H1 (cell line): ENCODE measurements at regions of chr6 and their contacts with region 1.

Region 1: DNA sequence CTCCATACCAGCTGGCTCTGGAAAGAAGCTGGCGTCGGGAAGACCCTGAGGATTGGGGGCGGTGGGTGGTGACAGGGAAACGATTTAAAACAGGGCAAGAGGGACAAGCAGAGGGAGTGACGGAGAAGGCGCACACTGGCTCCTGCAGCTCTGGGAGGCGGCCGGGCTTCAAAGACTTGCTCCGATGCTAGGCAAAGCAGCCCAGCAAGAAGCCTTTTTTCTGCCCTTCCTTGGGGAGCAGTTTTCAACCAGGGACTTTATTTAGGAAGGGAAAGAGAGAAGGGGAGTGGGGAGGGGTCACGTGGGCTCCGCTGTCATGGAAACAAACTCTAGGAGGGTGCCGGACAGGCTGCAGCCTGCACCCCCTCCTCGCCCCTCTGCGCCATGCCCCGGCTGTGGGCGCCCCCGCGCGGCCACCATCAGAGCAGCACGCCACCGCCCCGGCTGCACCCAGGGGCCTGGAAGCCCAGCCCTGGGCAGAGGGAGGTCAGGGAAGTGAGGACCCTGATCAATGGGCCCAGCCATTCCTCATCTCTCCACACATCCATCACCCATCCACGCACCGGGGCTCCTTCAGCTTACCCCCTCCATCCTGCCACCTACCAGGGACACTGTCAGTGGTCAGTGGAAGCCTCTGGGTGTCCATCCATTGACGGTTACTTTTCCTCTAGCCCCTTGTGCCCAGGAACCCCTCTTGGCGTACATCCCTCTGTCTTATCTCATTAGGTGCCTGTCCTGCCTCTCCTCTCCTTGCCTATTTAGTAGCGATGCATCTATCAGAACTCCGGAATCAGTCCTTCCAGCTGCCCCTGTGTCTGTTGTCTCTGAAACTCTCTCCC is 66.6 kb upstream of the CCDC167 start:
- DNase-seq: peak in 1 of 2 experiments; percentile 95
- H3K4me3 ChIP-seq: peak overlapping the region; percentile 21 to 71 (median 54)
- H3K27ac ChIP-seq: no peak overlapping the region
- H3K4me1 ChIP-seq: peaks cover 2 to 13% (median 5%) of the 10 kb centered on the region in 4 experiments; a peak in 6 of 7 replicates
- H3K27me3 ChIP-seq: no peaks in the 10 kb centered on the region; a peak in 2 of 7 replicates
- CTCF ChIP-seq: peak; percentile 84 to 93 (median 91)
- EP300 ChIP-seq: 0 out of 3 replicates have a peak, but pooled peaks of 1 of the 2 experiments have one; percentile 30
- POLR2A ChIP-seq: no peak
- RAD21 ChIP-seq: peak; percentile 89

Region 2: GRCh38 chr6:35905841-35906498 is 1660.4 kb before region 1 on chr6:
- CTCF ChIA-PET with region 1: no interaction called
- POLR2A ChIA-PET with region 1: no interaction called
- DNase-seq: no peak
- H3K4me3 ChIP-seq: no peak overlapping the region
- H3K27ac ChIP-seq: no peak overlapping the region
- H3K4me1 ChIP-seq: no peaks in the 10 kb centered on the region
- H3K27me3 ChIP-seq: no peaks in the 10 kb centered on the region
- CTCF ChIP-seq: no peak
- EP300 ChIP-seq: no peak
- POLR2A ChIP-seq: no peak
- RAD21 ChIP-seq: no peak

Region 3: GRCh38 chr6:37353761-37354525 is 212.4 kb before region 1 on chr6 and contains the start of gene RNF8:
- CTCF ChIA-PET with region 1: no interaction called
- POLR2A ChIA-PET with region 1: no interaction called
- DNase-seq: peak; percentile 82 to 95
- H3K4me3 ChIP-seq: peak within 1 kb of the TSS; percentile 81 to 96 (median 88)
- H3K27ac ChIP-seq: peak within 1 kb of the TSS; percentile 36; the same call in 1 of the 2 replicates
- H3K4me1 ChIP-seq: peaks cover 0 to 3% (median 3%) of the 10 kb centered on the region in 4 experiments; a peak in 4 of 7 replicates
- H3K27me3 ChIP-seq: no peaks in the 10 kb centered on the region; a peak in 1 of 7 replicates
- CTCF ChIP-seq: no peak
- EP300 ChIP-seq: no peak
- POLR2A ChIP-seq: peak in 1 of 2 experiments; percentile 68; a peak in 2 of 3 replicates
- RAD21 ChIP-seq: no peak
- total RNA-seq, gene RNF8: 44.7 and 46.2 TPM in 2 replicates

Region 4: DNA sequence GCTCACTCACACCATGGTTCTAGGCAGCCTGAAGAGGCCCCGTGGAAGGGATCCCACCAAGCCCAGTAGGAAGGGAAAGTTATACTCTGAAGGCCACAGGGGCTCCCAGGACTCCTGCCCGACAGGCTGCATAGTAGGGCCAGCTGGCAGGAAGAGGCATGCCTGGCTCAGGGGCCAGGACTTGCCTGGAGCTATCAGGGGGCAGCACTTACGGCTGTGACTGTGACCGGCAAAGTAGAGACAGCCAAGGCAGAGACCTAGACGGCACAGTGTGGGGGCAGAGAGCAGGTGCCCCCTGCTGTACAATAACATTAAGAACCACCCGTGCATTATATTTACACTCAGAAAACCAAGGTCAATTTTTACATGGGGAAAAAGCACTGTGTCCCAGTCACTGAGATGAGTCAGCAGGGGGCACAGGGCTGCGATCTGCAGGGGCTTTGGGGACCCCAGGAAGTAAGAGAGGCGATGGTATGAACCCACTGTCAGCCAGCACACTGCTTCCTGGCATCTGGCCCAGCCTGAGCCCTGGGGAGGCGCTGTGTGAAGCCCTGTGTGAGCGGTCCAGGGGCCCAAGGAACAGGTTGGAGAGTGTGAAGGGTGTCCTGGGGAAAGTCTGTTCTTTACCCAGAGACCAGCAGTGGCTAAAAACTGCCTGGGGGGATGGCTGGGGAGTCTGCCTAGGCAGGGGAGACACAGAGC is 76.5 kb before region 1 on chr6:
- CTCF ChIA-PET with region 1: interaction called, 25 read pairs
- POLR2A ChIA-PET with region 1: no interaction called
- DNase-seq: no peak
- H3K4me3 ChIP-seq: no peak overlapping the region
- H3K27ac ChIP-seq: no peak overlapping the region
- H3K4me1 ChIP-seq: peaks cover 12 to 30% (median 18%) of the 10 kb centered on the region in 4 experiments
- H3K27me3 ChIP-seq: peaks cover 0 to 2% (median 0%) of the 10 kb centered on the region in 4 experiments; a peak in 1 of 7 replicates
- CTCF ChIP-seq: no peak
- EP300 ChIP-seq: no peak
- POLR2A ChIP-seq: no peak
- RAD21 ChIP-seq: no peak

Region 5: DNA sequence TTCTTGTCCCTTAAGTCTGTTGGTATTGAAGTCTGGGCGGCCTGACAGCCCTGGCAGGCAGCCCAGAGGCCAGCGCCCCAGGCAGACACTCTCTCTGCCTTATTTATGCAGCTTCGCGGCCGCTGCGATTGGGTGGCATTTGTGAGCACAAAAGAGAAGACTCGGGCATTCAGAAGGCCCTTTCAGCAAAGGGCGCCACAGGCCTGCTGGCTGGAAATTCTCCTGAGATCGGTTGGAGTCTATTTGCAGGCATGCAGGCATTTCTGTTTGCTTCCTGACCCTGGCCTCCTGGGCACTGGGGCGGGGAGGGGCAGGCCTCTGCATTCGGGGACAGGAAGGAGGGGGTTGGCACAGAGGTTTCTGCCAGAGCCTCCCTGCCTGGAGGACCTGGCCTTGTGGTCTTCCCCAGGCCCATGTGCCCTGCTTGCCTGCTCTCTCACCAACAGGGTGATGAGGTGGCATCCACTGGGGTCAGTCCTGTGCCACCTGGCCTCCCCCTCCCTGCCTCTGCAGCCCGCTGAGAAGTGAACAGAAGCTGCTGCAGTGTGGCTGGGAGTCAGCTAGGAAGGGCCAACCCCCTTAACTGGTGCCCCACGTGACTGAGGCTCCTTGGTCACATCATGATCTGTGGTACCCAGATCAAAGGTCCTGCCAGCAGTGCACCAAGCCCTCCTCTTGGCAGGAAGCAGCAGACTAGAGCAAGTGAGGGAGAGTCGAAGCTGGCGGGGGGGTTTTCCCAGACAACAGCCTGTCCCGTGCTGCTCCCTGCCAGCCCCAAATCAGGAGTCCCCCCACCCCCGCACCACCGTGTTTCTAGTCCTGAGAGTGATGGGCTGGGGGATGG is 50.0 kb before region 1 on chr6:
- CTCF ChIA-PET with region 1: interaction called, 11 read pairs
- POLR2A ChIA-PET with region 1: interaction called, 3 read pairs
- DNase-seq: no peak
- H3K4me3 ChIP-seq: no peak overlapping the region
- H3K27ac ChIP-seq: no peak overlapping the region
- H3K4me1 ChIP-seq: peaks cover 2 to 47% (median 39%) of the 10 kb centered on the region in 4 experiments
- H3K27me3 ChIP-seq: peaks cover 0 to 24% (median 16%) of the 10 kb centered on the region in 4 experiments; a peak in 6 of 7 replicates
- CTCF ChIP-seq: no peak
- EP300 ChIP-seq: no peak
- POLR2A ChIP-seq: no peak
- RAD21 ChIP-seq: no peak; a peak in 1 of 4 replicates

Region 6: DNA sequence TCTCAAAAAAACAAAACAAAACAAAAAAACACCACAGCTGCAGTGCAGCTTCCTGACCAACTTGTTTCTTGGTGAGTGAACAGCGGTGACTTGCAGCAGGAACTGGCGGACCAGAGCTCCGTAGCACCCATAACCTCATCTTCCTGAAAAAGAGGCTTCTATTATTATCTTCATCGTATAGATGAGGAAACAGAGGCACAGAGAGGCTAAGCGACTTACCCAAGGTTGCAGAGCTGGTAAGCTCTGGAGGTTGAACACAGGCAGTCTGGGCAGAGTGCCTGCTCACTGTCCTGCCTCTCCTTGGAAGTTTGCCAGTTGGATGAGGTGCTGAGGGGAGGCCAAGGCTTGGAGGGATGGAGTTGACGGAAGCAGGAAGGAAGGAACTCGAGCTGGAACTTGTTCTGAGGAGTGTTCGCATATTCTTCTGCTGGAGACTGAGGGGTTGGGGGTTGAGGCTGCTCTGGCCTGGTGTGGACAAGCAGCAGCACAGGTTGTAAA is 18.7 kb before region 1 on chr6:
- CTCF ChIA-PET with region 1: interaction called, 96 read pairs
- POLR2A ChIA-PET with region 1: interaction called, 4 read pairs
- DNase-seq: no peak
- H3K4me3 ChIP-seq: no peak overlapping the region
- H3K27ac ChIP-seq: no peak overlapping the region
- H3K4me1 ChIP-seq: no peaks in the 10 kb centered on the region; a peak in 1 of 7 replicates
- H3K27me3 ChIP-seq: no peaks in the 10 kb centered on the region; a peak in 1 of 7 replicates
- CTCF ChIP-seq: no peak
- EP300 ChIP-seq: no peak
- POLR2A ChIP-seq: no peak
- RAD21 ChIP-seq: no peak

Region 7: GRCh38 chr6:37725957-37726356 is 159.6 kb after region 1 on chr6:
- CTCF ChIA-PET with region 1: no interaction called
- POLR2A ChIA-PET with region 1: no interaction called
- DNase-seq: no peak
- H3K4me3 ChIP-seq: no peak overlapping the region
- H3K27ac ChIP-seq: no peak overlapping the region
- H3K4me1 ChIP-seq: no peaks in the 10 kb centered on the region; a peak in 1 of 7 replicates
- H3K27me3 ChIP-seq: no peaks in the 10 kb centered on the region; a peak in 2 of 7 replicates
- CTCF ChIP-seq: no peak
- EP300 ChIP-seq: no peak
- POLR2A ChIP-seq: no peak
- RAD21 ChIP-seq: no peak